Sigmoid colon (tissue), 7 donors: ENCODE measurements at regions of chr5 and their contacts with region 1.

Region 1: DNA sequence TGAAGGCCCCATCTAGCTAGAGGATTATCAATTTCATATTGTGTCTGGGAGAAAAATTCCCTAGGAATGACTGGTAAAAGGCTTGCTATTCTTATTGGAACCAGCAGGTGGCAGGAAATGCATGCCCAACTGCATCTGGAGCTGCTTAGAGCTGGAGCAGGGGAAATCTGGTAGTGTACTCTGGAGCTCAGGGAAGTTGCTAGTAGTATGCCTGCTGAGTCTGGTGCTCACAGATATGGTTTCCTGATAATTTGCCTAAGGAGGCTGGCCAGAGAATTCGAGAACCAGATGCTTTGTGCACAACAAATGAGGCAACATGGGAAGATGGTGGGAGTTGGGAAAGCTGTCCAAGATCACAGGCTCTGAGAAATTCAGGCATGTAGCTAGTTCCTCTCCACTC is 53.7 kb downstream of the G3BP1 start:
- DNase-seq: peak; percentile 72
- H3K4me3 ChIP-seq: no peak overlapping the region
- H3K27ac ChIP-seq: no peak overlapping the region
- H3K4me1 ChIP-seq: peaks cover 0 to 7% (median 7%) of the 10 kb centered on the region in 4 donors
- H3K27me3 ChIP-seq: no peaks in the 10 kb centered on the region
- CTCF ChIP-seq: peak; percentile 6 to 75 (median 67)
- EP300 ChIP-seq: no peak
- POLR2A ChIP-seq: no peak

Region 2: GRCh38 chr5:151758430-151759241 is 66.8 kb before region 1 on chr5 and contains the start of gene ATOX1:
- intact Hi-C with region 1: no loop called
- DNase-seq: peak; percentile 95
- H3K4me3 ChIP-seq: peak within 1 kb of the TSS; percentile 75 to 87 (median 80)
- H3K27ac ChIP-seq: peak within 1 kb of the TSS; percentile 84 to 94 (median 88)
- H3K4me1 ChIP-seq: peaks cover 0 to 27% (median 24%) of the 10 kb centered on the region in 4 donors
- H3K27me3 ChIP-seq: no peaks in the 10 kb centered on the region
- CTCF ChIP-seq: peak; percentile 19 to 38 (median 30)
- EP300 ChIP-seq: no peak
- POLR2A ChIP-seq: peak; percentile 87 to 89
- total RNA-seq, gene ATOX1: 62.0 to 130 (median 80.4) TPM

Region 3: DNA sequence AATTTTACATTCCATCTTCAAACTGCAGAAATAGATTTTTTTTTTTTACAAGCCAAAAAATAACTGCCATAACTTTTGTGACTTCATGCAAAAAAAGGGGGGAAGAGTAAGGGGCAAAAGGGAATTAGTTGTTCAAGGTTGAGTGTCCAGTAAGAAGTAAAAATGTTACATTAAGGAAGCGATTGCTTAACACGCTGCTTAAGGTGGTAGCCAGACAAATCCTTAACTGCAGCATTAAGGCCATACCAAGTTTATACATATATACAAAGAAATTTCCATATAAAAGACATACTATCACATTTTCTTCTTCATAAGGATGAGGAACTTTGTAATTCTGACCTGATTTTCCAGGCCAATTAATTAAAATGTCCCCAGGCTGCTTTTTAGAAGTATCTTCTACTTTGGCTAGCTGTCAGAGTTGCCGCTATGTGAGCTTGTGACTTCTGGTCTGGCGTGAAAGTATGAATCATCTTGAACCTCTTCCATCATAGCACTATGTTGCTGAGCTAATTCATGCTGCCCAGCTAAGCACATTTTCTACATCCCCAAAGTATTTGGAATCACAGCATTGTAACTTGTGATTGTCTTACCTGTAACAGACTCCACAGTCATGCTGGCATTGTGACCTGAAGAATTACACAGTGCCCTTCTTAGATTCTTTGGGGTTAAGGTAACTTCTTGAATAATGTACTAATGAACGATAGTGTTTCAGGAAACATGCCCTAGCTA is 13.7 kb before region 1 on chr5:
- intact Hi-C with region 1: no loop called
- DNase-seq: peak; percentile 65
- H3K4me3 ChIP-seq: no peak overlapping the region
- H3K27ac ChIP-seq: peak overlapping the region in 1 of 4 donors; percentile 7
- H3K4me1 ChIP-seq: peaks cover 0 to 27% (median 23%) of the 10 kb centered on the region in 4 donors
- H3K27me3 ChIP-seq: no peaks in the 10 kb centered on the region
- CTCF ChIP-seq: no peak
- EP300 ChIP-seq: no peak
- POLR2A ChIP-seq: no peak

Region 4: GRCh38 chr5:152142840-152143469 is 317.5 kb after region 1 on chr5:
- intact Hi-C with region 1: loop called (anchors 5 kb)
- DNase-seq: peak; percentile 70
- H3K4me3 ChIP-seq: no peak overlapping the region
- H3K27ac ChIP-seq: no peak overlapping the region
- H3K4me1 ChIP-seq: no peaks in the 10 kb centered on the region
- H3K27me3 ChIP-seq: no peaks in the 10 kb centered on the region
- CTCF ChIP-seq: peak in 3 of 4 experiments; percentile 43 to 81 (median 44)
- EP300 ChIP-seq: no peak
- POLR2A ChIP-seq: no peak

Region 5: GRCh38 chr5:152514827-152515397 is 689.5 kb after region 1 on chr5:
- intact Hi-C with region 1: loop called (anchors 10 kb)
- DNase-seq: no peak
- H3K4me3 ChIP-seq: no peak overlapping the region
- H3K27ac ChIP-seq: no peak overlapping the region
- H3K4me1 ChIP-seq: no peaks in the 10 kb centered on the region
- H3K27me3 ChIP-seq: no peaks in the 10 kb centered on the region
- CTCF ChIP-seq: no peak
- EP300 ChIP-seq: no peak
- POLR2A ChIP-seq: no peak